HEK293T (cell line): ENCODE measurements at regions of chr12 and their contacts with region 1.

Region 1: DNA sequence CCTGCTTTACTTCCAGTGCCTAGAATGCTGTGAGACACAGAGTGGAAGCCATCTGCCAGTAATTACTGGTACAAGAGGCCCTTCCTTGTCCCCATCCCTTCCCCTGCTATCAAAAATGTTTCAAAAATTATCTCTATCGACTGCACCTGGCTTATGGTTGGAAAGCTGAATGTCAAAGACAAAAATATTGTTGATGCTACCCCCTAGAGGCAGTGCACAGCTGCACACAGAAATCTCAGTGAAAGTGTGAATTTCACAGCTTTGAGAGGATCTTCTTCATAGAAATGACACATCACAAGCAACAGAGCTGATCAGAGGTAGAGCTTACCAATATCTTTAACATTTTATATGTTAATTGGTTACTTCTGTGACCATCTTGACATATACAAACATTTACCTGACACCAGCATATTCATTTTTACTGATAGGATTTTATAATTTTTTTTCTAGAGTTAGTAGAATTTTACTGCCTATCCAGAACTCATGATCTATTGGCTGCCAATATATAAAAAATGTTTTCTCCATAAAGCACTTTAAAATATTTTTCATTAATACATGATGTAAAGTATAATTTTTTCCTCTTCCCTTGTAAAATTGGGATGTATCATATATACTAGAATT is 138.0 kb downstream of the AACS start:
- DNase-seq: peak; percentile 47

Region 2: DNA sequence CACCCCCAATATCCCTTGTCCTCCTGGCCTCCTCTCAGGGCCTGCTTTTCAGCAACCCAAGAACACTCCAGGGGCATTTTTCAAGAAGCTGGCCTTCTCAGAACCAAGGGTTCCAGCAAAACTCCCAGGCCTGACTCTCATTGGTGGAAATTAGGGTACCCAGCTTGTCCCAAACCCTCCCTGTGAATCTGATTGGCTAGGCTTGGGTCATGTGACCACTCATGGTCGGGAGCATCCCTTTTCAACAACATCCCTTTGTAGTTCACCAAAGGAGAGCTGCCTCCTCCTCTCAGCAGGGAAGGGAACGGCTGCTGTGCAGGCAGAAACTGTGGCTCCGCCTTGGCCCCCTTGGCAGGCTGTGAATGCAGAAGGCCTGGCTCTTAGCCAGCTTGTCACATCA is 43.6 kb before region 1 on chr12:
- CTCF ChIA-PET with region 1: no interaction called
- POLR2A ChIA-PET with region 1: no interaction called
- DNase-seq: no peak

Region 3: DNA sequence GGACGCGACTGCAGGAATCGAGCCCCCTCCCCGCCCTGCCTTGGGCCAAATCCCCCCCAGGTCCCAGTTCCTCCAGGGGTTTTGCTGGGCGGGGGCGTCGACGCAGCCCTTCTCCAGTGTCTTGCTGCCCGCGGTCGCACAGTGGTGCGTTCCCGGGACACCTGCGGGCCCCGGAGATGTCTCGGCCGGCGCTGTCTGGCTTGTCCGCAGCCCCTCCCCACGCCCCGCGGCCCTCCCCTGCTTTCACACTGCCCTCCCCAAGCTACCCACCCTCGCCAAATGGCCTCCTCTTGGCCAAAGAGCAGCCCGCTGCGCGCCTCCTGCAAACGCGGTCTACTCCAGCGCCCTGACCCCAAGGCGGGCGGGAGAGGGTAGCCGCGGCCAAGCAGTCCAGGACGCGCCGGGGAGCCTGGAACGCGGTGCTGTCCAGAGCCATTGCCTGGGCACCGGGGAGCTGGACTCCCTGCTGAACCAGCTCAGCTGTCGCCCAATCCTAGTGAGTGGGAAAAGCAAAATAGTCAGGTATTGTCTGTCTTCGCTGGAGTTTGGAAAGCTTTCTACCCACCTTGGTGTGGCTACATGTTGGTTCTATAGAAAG is 16.0 kb before region 1 on chr12:
- CTCF ChIA-PET with region 1: interaction called, 10 read pairs
- POLR2A ChIA-PET with region 1: interaction called, 3 read pairs
- DNase-seq: no peak

Region 4: GRCh38 chr12:125228519-125229260 is 25.4 kb after region 1 on chr12:
- CTCF ChIA-PET with region 1: no interaction called
- POLR2A ChIA-PET with region 1: no interaction called
- DNase-seq: peak; percentile 49

Region 5: DNA sequence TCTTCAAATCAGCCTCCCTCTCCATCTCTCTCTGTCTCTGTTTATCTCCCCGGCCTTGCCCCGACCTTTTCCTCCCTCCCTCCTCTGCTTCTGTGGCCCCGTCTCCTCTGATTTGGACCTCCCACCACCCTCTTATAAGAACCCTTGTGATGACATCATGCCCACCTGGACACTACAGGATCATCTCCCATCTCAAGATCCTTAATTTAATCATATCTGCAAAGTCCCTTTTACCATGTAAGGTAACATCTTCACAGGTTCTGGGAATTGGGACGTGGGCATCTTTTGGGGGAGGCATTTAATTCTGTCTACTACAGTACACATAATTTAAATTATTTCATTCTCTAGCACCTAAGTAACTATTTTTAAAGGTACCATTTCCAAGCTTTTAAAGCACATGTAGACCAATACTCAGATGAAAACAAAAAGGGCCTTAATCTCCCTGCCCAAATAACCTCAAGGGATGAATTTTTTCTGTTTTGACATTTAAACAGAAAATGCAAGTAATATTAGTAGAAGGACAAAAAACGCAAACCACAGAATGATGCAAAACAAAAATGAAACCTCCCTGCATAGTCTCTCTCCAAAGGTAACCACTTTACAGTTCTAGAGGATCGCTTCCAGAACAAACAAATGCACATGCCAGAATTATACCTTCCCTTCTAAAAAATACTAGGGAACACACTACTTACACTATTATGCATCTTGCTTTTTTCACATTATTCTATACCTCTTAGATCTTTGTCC is 84.0 kb after region 1 on chr12:
- CTCF ChIA-PET with region 1: no interaction called
- POLR2A ChIA-PET with region 1: no interaction called
- DNase-seq: no peak